Posterior vena cava (tissue), 2 donors: ENCODE measurements at regions of chr1 and their contacts with region 1.

Region 1: DNA sequence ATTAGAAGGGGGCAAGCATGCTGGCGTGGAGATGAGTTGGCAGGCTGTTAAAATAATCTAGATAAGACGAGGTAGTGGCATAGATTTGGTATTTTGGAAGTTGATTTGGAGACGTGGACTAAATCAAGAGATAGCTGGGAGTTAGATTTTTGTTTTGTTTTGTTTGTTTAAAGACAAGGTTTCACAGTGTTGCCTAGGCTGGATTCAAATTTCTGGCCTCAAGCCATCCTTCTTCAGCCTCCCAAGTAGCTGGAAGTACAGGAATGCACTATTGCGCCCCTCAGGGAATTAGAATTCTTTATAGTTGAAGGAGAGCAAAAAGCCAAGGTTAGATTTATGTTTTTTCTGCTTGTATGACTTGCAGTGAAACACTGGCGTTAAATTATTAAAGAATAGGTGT is 22.3 kb upstream of the SNRPE start:
- DNase-seq: no peak

Region 2: DNA sequence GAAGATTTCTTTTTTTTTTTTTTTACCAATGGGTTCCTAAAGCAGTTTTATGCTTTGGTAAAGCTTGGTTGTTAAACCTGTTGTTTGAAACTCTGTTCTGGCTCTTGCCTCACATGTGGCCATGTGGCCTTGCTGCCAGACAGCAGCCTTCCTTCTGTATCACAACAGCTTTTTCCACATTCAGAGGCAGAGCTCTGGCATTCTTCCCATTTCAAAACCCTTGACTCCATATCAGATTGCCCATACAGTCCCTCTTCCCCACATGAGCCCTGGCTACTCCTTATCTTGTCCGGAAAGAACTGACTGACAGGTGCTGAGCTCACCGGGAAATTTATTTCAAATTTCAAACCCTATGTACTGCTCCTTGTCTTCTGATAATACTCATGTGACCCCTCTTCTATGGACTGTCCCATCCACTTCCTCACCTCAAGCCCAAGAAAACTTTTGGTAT is 112.6 kb before region 1 on chr1:
- intact Hi-C with region 1: loop called (anchors 10 kb)
- DNase-seq: no peak

Region 3: GRCh38 chr1:203733009-203733863 is 105.8 kb before region 1 on chr1:
- intact Hi-C with region 1: loop called (anchors 10 kb)
- DNase-seq: no peak

Region 4: GRCh38 chr1:203795441-203796235 is 43.4 kb before region 1 on chr1 and contains the starts of genes ZBED6 and ZC3H11A:
- intact Hi-C with region 1: no loop called
- DNase-seq: peak; percentile 100
- total RNA-seq, gene ZBED6: 27.0 to 33.8 TPM
- total RNA-seq, gene ZC3H11A: 58.1 to 58.7 TPM